Activated CD8-positive, alpha-beta T cell treated with anti-CD3 and anti-CD28 coated beads, Interleukin-2, amount 10 ng/mL, durations not matched to agents 7 days and 5 days (primary cell): ENCODE measurements at regions of chr16 and their contacts with region 1.

Region 1: DNA sequence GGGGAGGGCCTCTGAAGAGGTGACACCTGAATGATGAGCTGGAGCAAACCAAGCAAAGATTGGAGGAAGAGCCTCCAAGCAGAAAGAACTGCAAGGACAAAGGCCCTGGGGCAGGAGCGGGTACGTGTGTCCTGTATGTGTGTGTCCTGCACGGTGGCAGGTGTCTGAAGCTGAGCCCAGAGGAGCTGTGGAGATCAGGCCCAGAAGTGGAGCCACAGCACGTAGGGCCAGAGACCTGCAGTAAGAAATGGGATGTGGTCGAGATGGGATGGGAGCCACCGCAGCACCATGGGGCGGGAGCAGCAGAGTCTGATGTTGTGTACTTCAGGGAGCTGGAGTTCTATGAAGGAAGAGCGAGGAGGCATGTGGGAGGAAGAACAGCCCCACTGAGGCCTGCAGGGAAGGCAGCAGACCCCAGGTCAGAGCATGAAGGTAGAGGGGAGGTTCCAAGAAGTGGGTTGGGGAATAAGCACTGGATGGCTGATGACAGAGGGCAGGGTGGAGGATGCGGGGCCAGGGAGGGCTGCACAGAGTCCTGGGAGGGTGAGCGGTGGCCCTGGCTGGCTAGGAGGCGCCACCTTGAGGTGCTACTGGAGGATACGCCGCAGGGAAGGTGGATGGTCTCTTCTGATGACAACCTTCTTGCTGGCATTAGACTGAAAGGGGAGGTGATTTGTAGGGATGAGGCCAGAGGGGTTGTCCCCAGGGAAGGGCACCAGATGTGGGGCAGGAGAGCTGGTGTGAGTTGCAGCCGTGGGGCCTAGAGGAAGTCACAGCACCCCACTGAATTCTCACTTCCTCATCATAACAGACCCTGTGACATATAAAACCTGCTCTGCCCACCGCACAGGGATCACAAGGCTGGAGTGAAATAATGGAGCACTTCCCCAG is 10.6 kb upstream of the CETP start:
- DNase-seq: peak; percentile 75
- ATAC-seq: peak; percentile 82
- H3K4me3 Mint-ChIP-seq: no peak overlapping the region
- H3K27ac Mint-ChIP-seq: peak overlapping the region; percentile 18
- H3K4me1 Mint-ChIP-seq: peaks cover 16% of the 10 kb centered on the region
- H3K27me3 Mint-ChIP-seq: peaks cover under 1% of the 10 kb centered on the region

Region 2: GRCh38 chr16:56695246-56695645 is 255.9 kb before region 1 on chr16:
- CTCF ChIA-PET with region 1: no interaction called
- POLR2A ChIA-PET with region 1: no interaction called
- DNase-seq: no peak
- ATAC-seq: no peak
- H3K4me3 Mint-ChIP-seq: no peak overlapping the region
- H3K27ac Mint-ChIP-seq: no peak overlapping the region
- H3K4me1 Mint-ChIP-seq: no peaks in the 10 kb centered on the region
- H3K27me3 Mint-ChIP-seq: peaks cover 2% of the 10 kb centered on the region

Region 3: DNA sequence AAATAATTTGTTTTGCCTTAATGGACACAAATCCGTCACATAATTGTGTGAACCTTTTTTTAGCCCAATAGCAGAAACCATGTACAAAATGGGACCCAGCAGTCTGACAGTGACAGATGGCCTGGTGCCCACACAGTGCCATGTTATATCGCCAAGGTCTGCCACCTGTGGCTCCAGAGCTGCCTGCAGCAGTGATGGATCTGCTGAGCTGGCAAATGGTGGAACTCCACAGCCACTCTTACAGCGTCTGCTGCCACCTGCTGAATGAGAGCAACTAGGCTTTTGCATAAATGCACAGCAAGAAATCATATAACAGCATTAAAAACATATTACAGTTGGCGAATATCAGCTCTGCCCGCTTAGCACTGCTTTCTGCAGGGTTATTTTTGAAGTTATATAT is 161.8 kb before region 1 on chr16:
- CTCF ChIA-PET with region 1: interaction called, 39 read pairs
- POLR2A ChIA-PET with region 1: no interaction called
- DNase-seq: peak; percentile 57
- ATAC-seq: peak; percentile 69
- H3K4me3 Mint-ChIP-seq: no peak overlapping the region
- H3K27ac Mint-ChIP-seq: no peak overlapping the region
- H3K4me1 Mint-ChIP-seq: no peaks in the 10 kb centered on the region
- H3K27me3 Mint-ChIP-seq: no peaks in the 10 kb centered on the region

Region 4: DNA sequence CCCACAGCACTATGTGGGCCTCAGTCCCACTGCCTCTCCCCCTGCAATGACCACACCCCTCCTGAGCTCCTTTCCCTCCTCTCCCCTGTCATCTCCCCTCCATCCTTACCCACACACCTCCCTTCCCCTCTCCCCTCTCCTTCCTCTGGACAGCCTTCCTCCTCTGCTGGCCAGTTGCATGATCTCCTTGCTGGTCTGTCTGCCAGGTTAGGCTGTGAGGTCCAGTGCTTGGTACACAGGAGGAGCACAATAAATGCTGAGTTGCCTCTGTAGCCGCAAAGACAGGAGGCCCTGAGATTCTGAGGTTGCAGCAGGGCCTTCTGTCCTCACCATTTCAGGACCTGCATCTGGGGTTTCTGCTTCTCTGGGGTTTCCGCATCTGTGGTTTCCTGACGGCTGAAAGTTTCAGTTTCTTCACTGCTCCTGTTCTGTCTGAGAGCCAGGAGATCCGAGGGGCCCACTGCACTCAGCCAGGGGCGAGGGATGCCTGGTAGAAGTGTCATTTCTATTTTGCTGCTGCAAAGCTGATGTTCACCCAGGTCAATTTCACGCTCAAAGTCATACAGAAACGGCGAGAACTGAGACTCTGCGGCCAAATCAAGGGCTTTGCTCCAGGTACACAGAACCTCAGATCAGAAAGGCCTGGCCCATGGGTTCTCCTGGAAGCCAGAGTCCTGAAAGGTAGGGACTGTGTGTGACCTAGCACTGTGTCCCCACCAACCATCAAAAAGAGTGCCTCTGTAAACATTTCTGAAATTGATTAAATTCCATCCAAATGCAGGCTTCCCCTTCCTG is 90.7 kb before region 1 on chr16:
- CTCF ChIA-PET with region 1: interaction called, 57 read pairs
- POLR2A ChIA-PET with region 1: interaction called, 3 read pairs
- DNase-seq: peak; percentile 75
- ATAC-seq: peak; percentile 84
- H3K4me3 Mint-ChIP-seq: peak overlapping the region; percentile 63
- H3K27ac Mint-ChIP-seq: peak overlapping the region; percentile 93
- H3K4me1 Mint-ChIP-seq: peaks cover 56% of the 10 kb centered on the region
- H3K27me3 Mint-ChIP-seq: no peaks in the 10 kb centered on the region

Region 5: GRCh38 chr16:56866943-56867830 is 83.9 kb before region 1 on chr16:
- CTCF ChIA-PET with region 1: interaction called, 57 read pairs
- POLR2A ChIA-PET with region 1: no interaction called
- DNase-seq: peak; percentile 70
- ATAC-seq: no peak
- H3K4me3 Mint-ChIP-seq: no peak overlapping the region
- H3K27ac Mint-ChIP-seq: no peak overlapping the region
- H3K4me1 Mint-ChIP-seq: peaks cover 30% of the 10 kb centered on the region
- H3K27me3 Mint-ChIP-seq: no peaks in the 10 kb centered on the region

Region 6: DNA sequence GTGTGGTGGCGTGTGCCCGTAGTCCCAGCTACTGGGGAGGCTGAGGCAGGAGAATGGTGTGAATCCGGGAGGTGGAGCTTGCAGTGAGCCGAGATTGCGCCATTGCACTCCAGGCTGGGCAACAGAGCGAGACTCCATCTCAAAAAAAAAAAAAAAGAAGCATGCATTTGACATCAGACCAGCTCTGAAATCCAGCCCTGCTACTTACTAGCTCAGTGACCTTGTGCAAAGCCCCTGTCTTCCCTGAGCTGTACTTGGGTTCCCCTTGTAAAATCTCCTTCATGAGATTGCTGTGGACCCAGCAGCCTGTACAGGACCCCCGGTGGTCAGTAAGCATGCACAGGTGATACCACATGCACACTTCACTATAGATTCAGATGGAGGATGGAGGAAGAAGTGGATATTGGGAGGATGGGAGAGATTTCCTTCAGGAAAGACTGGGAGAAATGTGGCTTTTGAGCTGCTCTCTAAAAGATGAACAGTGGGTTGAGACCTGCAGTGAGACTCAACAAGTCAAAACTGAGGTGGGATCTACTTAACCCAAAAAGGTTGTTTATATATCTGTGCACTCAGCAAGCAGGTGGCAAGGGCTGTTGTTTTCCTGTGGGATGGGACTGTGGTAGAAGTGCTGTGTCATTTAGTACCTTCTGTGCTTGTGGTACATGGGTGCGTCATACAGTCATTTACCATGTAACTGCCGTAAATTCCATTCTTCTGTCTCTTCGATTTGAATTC is 12.5 kb before region 1 on chr16:
- CTCF ChIA-PET with region 1: interaction called, 18 read pairs
- POLR2A ChIA-PET with region 1: interaction called, 67 read pairs
- DNase-seq: peak; percentile 73
- ATAC-seq: peak; percentile 70
- H3K4me3 Mint-ChIP-seq: peak overlapping the region; percentile 57
- H3K27ac Mint-ChIP-seq: peak overlapping the region; percentile 75
- H3K4me1 Mint-ChIP-seq: peaks cover 72% of the 10 kb centered on the region
- H3K27me3 Mint-ChIP-seq: no peaks in the 10 kb centered on the region

Region 7: GRCh38 chr16:57000271-57001025 is 49.3 kb after region 1 on chr16:
- CTCF ChIA-PET with region 1: no interaction called
- POLR2A ChIA-PET with region 1: no interaction called
- DNase-seq: peak; percentile 58
- ATAC-seq: peak; percentile 45
- H3K4me3 Mint-ChIP-seq: peak overlapping the region; percentile 52
- H3K27ac Mint-ChIP-seq: peak overlapping the region; percentile 92
- H3K4me1 Mint-ChIP-seq: peaks cover 93% of the 10 kb centered on the region
- H3K27me3 Mint-ChIP-seq: no peaks in the 10 kb centered on the region